Right ventricle myocardium inferior (tissue), 1 donor: ENCODE measurements at regions of chr2 and their contacts with region 1.

Region 1: GRCh38 chr2:62112179-62112578 is 83.7 kb upstream of the B3GNT2 start:
- DNase-seq: no peak
- ATAC-seq: no peak

Region 2: GRCh38 chr2:61943251-61943650 is 168.9 kb before region 1 on chr2:
- intact Hi-C with region 1: no loop called
- DNase-seq: no peak
- ATAC-seq: no peak

Region 3: DNA sequence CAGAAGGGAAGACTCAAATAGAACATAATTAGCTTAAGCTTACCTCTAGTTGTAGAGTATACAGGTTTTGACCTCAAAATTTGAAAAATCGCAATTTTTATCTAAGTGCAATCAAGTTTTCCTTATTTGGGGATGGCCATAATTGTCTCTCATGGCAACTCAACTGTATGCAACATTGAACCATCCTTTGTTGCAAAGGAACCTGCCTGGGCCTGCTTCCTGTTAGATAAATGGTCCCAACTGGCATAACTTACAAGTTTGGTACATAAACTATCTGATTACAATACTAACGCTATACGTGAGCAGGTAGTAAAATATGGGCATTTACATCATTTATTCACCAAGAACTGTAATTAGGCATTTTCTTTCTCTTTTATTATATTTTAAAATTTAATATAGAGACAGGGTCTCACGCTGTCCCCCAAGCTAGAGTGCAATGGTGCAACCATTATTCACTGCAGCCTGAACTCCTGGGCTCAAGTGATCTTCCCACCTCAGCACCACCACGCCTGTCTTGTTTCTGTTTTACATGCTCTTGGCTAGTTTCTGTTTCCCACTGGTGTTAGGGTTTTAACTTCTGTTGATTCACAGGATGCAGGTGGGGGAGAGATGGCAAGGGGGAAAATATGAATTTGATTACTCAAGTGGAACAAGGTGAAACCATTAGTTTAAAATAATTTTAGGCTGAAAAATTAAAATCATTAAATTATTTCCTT is 28.4 kb after region 1 on chr2:
- intact Hi-C with region 1: no loop called
- DNase-seq: no peak
- ATAC-seq: no peak

Region 4: GRCh38 chr2:62156861-62157496 is 44.8 kb after region 1 on chr2:
- intact Hi-C with region 1: loop called (anchors 5 kb)
- DNase-seq: no peak
- ATAC-seq: no peak